T-cell (primary cell): ENCODE measurements at regions of chr5 and their contacts with region 1.

Region 1: GRCh38 chr5:54217826-54218503 is 92.4 kb downstream of the ARL15 start:
- DNase-seq: peak in 1 of 35 experiments; percentile 53
- ATAC-seq: no peak
- H3K4me3 ChIP-seq: no peak overlapping the region
- H3K4me3 Mint-ChIP-seq: no peak overlapping the region
- H3K27ac ChIP-seq: no peak overlapping the region
- H3K27ac Mint-ChIP-seq: no peak overlapping the region
- H3K4me1 ChIP-seq: no peaks in the 10 kb centered on the region
- H3K4me1 Mint-ChIP-seq: peaks cover 8 to 21% (median 9%) of the 10 kb centered on the region in 3 donors
- H3K27me3 ChIP-seq: no peaks in the 10 kb centered on the region
- H3K27me3 Mint-ChIP-seq: no peaks in the 10 kb centered on the region

Region 2: DNA sequence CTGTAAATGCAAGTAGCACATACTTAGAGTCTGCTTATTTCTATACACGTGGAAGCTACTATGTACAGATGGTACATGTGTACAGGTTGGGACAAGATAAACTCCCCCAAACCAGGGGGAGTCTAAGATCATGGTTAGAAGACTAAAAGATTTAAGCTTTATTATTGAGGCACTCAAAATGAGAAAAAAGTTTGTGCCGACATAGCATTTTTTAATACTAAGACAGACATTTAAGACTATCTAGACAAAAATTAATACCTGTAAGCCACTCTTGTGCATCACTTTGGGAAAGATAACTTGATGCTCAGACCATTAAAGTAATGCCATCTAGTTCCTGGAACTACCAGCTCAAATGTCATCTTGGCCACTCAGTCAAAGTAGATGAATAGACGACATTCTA is 187.0 kb before region 1 on chr5:
- CTCF ChIA-PET with region 1: no interaction called
- POLR2A ChIA-PET with region 1: no interaction called
- DNase-seq: no peak
- ATAC-seq: no peak
- H3K4me3 ChIP-seq: no peak overlapping the region
- H3K4me3 Mint-ChIP-seq: no peak overlapping the region
- H3K27ac ChIP-seq: no peak overlapping the region
- H3K27ac Mint-ChIP-seq: no peak overlapping the region
- H3K4me1 ChIP-seq: no peaks in the 10 kb centered on the region
- H3K4me1 Mint-ChIP-seq: no peaks in the 10 kb centered on the region
- H3K27me3 ChIP-seq: no peaks in the 10 kb centered on the region
- H3K27me3 Mint-ChIP-seq: no peaks in the 10 kb centered on the region

Region 3: GRCh38 chr5:54180616-54181015 is 37.3 kb before region 1 on chr5:
- CTCF ChIA-PET with region 1: interaction called in 1 of 2 experiments, 11 read pairs
- POLR2A ChIA-PET with region 1: no interaction called
- DNase-seq: no peak
- ATAC-seq: no peak
- H3K4me3 ChIP-seq: no peak overlapping the region
- H3K4me3 Mint-ChIP-seq: no peak overlapping the region
- H3K27ac ChIP-seq: no peak overlapping the region
- H3K27ac Mint-ChIP-seq: no peak overlapping the region
- H3K4me1 ChIP-seq: no peaks in the 10 kb centered on the region
- H3K4me1 Mint-ChIP-seq: peaks cover 15 to 22% (median 22%) of the 10 kb centered on the region in 3 donors
- H3K27me3 ChIP-seq: no peaks in the 10 kb centered on the region
- H3K27me3 Mint-ChIP-seq: no peaks in the 10 kb centered on the region

Region 4: DNA sequence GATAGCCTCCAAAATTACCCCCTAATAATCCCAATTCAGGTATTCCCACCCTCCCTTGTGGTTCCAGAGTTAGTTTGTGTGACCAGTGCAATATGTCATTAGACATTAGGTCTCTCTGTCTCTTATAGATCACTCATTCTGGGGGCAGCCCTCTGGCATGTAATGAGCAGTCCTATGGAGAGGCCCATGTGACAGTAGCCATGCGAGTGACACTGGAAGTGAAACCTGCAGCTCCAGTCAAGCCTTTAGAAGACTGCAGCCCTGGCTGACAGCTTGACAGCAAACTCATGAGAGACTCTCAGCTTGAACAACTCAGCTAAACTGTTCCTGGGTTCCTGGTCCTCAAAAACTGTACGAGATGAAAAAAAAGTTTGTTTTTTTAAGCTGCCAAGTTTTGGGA is 183.6 kb after region 1 on chr5:
- CTCF ChIA-PET with region 1: no interaction called
- POLR2A ChIA-PET with region 1: no interaction called
- DNase-seq: no peak
- ATAC-seq: no peak
- H3K4me3 ChIP-seq: no peak overlapping the region
- H3K4me3 Mint-ChIP-seq: no peak overlapping the region
- H3K27ac ChIP-seq: no peak overlapping the region
- H3K27ac Mint-ChIP-seq: no peak overlapping the region
- H3K4me1 ChIP-seq: no peaks in the 10 kb centered on the region
- H3K4me1 Mint-ChIP-seq: no peaks in the 10 kb centered on the region
- H3K27me3 ChIP-seq: no peaks in the 10 kb centered on the region
- H3K27me3 Mint-ChIP-seq: peaks cover 3 to 4% of the 10 kb centered on the region in 2 donors